ENCODE measurements at regions of chr4 and their contacts with region 1.

Region 1: DNA sequence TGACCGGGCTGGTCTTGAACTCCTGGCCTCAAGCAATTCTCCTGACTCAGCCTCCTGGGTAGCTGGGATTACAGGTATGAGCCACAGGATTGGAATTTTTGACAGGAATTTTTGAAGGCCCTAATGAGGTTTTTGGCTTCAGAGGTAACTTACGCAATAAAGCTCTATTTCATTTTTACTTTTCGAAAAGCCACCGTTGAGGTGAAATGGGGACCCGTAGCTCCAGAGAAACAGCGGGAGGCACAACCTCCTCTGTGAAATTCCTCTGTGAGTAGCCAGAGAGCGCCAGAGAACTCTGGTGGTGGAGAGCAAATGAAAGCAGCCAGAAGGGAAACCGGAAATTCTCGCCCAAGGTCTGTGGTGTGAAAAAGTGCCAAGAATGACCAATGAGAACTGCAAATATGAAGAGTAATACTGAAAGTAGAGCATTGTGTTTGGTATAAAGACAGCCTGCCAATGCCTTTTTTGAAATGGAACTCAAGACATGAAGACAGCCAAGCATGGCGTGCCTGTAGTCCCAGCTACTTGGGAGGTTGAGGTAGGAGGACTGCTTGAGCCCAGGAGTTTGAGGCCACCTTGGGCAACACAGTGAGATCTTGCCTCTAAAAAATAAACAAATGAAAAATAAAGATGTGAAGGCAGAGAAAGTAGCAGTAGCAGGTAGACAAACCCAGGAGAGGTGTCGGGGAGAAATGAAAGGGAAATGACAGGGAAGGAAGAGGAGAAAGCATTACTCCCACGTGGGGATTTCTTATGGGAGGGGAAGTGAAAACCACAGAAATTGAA is 33.0 kb upstream of the TMEM131L start:
- DNase-seq: peak; percentile 88
- ATAC-seq: peak; percentile 81
- H3K4me3 ChIP-seq: peak overlapping the region; percentile 29 to 65 (median 40)
- H3K4me3 Mint-ChIP-seq: peak overlapping the region; percentile 78
- H3K27ac ChIP-seq: peak overlapping the region; percentile 84 to 85
- H3K27ac Mint-ChIP-seq: peak overlapping the region; percentile 84
- H3K4me1 ChIP-seq: peaks cover 60 to 64% of the 10 kb centered on the region in 2 donors
- H3K4me1 Mint-ChIP-seq: peaks cover 65% of the 10 kb centered on the region
- H3K27me3 ChIP-seq: no peaks in the 10 kb centered on the region
- H3K27me3 Mint-ChIP-seq: no peaks in the 10 kb centered on the region
- CTCF ChIP-seq: peak; percentile 77

Region 2: GRCh38 chr4:153466081-153466948 is 33.2 kb after region 1 on chr4 and contains the start of gene TMEM131L:
- CTCF ChIA-PET with region 1: interaction called, 73 read pairs
- POLR2A ChIA-PET with region 1: interaction called, 9 read pairs
- intact Hi-C with region 1: loop called (anchors 1 kb)
- DNase-seq: peak; percentile 90
- ATAC-seq: peak; percentile 51
- H3K4me3 ChIP-seq: peak within 1 kb of the TSS; percentile 62 to 98 (median 94)
- H3K4me3 Mint-ChIP-seq: peak within 1 kb of the TSS; percentile 94
- H3K27ac ChIP-seq: peak within 1 kb of the TSS; percentile 83 to 99
- H3K27ac Mint-ChIP-seq: peak within 1 kb of the TSS; percentile 96
- H3K4me1 ChIP-seq: peaks cover 37 to 44% of the 10 kb centered on the region in 2 donors
- H3K4me1 Mint-ChIP-seq: peaks cover 55% of the 10 kb centered on the region
- H3K27me3 ChIP-seq: no peaks in the 10 kb centered on the region
- H3K27me3 Mint-ChIP-seq: no peaks in the 10 kb centered on the region
- CTCF ChIP-seq: peak; percentile 17
- total RNA-seq, gene TMEM131L: 120 and 123 TPM in 2 replicates

Region 3: GRCh38 chr4:153521999-153522801 is 89.0 kb after region 1 on chr4:
- CTCF ChIA-PET with region 1: interaction called, 18 read pairs
- POLR2A ChIA-PET with region 1: interaction called, 3 read pairs
- intact Hi-C with region 1: loop called (anchors 1 kb)
- DNase-seq: peak; percentile 66
- ATAC-seq: peak; percentile 29
- H3K4me3 ChIP-seq: peak overlapping the region in 3 of 5 experiments; percentile 14 to 51 (median 17)
- H3K4me3 Mint-ChIP-seq: peak overlapping the region; percentile 82
- H3K27ac ChIP-seq: peak overlapping the region; percentile 61 to 87
- H3K27ac Mint-ChIP-seq: peak overlapping the region; percentile 88
- H3K4me1 ChIP-seq: peaks cover 91 to 96% of the 10 kb centered on the region in 2 donors
- H3K4me1 Mint-ChIP-seq: peaks cover 96% of the 10 kb centered on the region
- H3K27me3 ChIP-seq: no peaks in the 10 kb centered on the region
- H3K27me3 Mint-ChIP-seq: no peaks in the 10 kb centered on the region
- CTCF ChIP-seq: no peak

Region 4: DNA sequence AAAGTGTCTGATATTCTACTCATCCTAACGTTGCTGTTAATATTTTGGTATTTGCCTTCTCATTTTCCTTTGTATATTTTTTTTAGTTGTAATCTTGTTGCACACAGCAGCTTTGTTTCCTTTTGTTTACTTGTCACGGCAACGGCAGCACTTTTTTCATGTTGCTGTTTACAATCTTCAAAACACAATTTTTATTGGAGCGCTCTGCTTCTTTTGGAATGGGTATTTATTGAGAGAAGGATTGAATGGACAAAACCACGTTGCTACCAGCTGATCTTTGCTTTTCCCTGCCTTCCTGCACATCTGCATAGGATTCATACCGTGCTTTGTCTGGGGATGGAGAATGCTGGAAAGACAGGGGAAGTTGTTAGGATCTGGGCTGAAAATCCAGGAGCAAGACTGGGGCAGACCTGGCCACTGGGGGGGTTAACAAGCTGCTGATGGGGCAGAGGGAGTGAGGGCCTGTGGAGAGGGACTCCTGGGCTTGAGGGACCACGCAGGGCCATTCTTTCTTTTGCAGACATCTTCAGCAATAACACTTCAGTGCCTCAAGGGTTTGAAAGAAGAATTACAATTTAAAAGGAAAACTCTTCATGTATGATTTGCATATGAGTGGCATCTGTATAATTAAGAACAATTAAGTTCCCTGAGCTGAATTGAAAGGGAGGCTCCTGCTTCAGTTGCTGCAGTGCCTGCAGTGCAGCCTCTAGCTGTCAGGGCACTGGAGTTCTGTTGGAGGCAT is 102.8 kb after region 1 on chr4:
- CTCF ChIA-PET with region 1: interaction called, 18 read pairs
- POLR2A ChIA-PET with region 1: interaction called, 3 read pairs
- intact Hi-C with region 1: no loop called
- DNase-seq: peak; percentile 41
- ATAC-seq: peak; percentile 33
- H3K4me3 ChIP-seq: no peak overlapping the region
- H3K4me3 Mint-ChIP-seq: peak overlapping the region; percentile 64
- H3K27ac ChIP-seq: peak overlapping the region; percentile 45 to 74
- H3K27ac Mint-ChIP-seq: peak overlapping the region; percentile 85
- H3K4me1 ChIP-seq: peaks cover 68 to 69% of the 10 kb centered on the region in 2 donors
- H3K4me1 Mint-ChIP-seq: peaks cover 78% of the 10 kb centered on the region
- H3K27me3 ChIP-seq: no peaks in the 10 kb centered on the region
- H3K27me3 Mint-ChIP-seq: no peaks in the 10 kb centered on the region
- CTCF ChIP-seq: peak; percentile 52

Region 5: DNA sequence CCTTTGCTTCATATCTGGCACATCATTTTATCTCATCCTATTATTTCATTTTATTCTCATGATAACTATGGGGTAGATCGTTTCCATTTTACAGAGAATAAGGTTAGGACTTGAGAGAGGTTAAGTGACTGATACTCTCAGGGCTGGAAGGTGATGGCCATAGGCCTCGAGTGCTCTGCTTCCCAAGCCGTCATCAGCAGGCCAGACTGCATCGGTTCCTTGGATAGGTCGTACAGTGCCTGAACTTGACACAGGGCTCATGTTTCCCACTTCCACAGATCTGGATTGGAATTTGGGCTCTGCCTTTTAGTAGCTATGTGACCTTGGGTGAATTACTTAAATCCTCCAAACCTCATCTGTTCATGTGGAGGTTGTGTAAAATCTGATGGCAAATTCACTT is 114.4 kb after region 1 on chr4:
- CTCF ChIA-PET with region 1: interaction called, 19 read pairs
- POLR2A ChIA-PET with region 1: interaction called, 4 read pairs
- intact Hi-C with region 1: no loop called
- DNase-seq: no peak
- ATAC-seq: no peak
- H3K4me3 ChIP-seq: no peak overlapping the region
- H3K4me3 Mint-ChIP-seq: no peak overlapping the region
- H3K27ac ChIP-seq: peak overlapping the region in 1 of 2 donors; percentile 24
- H3K27ac Mint-ChIP-seq: peak overlapping the region; percentile 46
- H3K4me1 ChIP-seq: peaks cover 8 to 20% of the 10 kb centered on the region in 2 donors
- H3K4me1 Mint-ChIP-seq: peaks cover 50% of the 10 kb centered on the region
- H3K27me3 ChIP-seq: no peaks in the 10 kb centered on the region
- H3K27me3 Mint-ChIP-seq: no peaks in the 10 kb centered on the region
- CTCF ChIP-seq: no peak

Region 6: GRCh38 chr4:153988492-153989363 is 555.6 kb after region 1 on chr4:
- CTCF ChIA-PET with region 1: no interaction called
- POLR2A ChIA-PET with region 1: no interaction called
- intact Hi-C with region 1: no loop called
- DNase-seq: no peak
- ATAC-seq: no peak
- H3K4me3 ChIP-seq: no peak overlapping the region
- H3K4me3 Mint-ChIP-seq: no peak overlapping the region
- H3K27ac ChIP-seq: no peak overlapping the region
- H3K27ac Mint-ChIP-seq: no peak overlapping the region
- H3K4me1 ChIP-seq: no peaks in the 10 kb centered on the region
- H3K4me1 Mint-ChIP-seq: no peaks in the 10 kb centered on the region
- H3K27me3 ChIP-seq: no peaks in the 10 kb centered on the region
- H3K27me3 Mint-ChIP-seq: no peaks in the 10 kb centered on the region
- CTCF ChIP-seq: no peak